ENCODE measurements at regions of chr7 and their contacts with region 1.

Region 1: DNA sequence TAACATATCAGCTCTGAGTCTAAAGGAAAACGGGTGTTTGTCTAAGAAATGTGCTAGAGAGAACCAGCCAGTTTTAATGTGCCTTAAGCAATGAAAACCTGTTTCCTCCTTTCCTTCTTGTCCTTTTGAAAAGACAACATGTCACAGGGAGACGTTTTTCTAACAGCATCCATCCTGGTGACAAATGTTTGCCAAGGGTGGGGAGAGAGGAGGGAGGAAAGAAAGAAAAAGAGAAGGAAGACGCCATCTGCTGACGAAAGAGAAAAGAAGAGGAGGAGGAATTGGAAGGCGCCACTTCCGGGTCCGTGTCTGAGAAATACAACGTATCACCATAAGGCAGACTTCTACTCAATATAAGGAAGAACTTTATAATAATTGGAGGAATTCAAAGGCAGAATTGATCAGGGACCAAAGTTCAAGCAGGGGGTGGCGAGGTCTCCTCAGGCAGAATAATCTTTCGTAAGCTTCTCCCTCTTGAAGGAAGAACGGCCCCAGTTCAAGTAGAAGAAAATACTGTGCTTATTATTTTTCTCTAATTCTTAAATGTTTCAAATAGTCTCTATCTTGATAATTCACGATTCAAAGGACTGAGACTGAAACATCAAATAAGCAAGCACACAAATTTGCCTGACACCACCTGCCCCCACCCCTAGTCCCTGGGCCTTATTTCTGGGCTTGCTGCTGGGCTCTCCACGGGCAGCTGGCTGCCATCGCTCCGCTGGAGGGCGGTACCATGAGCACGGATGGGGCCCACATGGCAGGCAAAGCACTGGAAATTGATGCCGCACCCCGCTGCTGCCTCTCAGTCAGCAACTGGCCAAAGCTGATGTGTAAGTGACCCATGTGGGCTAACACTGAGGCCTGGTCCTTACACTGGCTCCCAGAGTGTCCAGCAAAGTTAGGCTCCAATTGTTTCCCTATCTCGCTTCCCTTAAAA is 273.7 kb upstream of the KLF14 start:
- DNase-seq: peak; percentile 53
- H3K4me3 Mint-ChIP-seq: peak overlapping the region; percentile 68
- H3K27ac Mint-ChIP-seq: peak overlapping the region; percentile 89
- H3K4me1 Mint-ChIP-seq: peaks cover 75% of the 10 kb centered on the region
- H3K27me3 Mint-ChIP-seq: no peaks in the 10 kb centered on the region

Region 2: DNA sequence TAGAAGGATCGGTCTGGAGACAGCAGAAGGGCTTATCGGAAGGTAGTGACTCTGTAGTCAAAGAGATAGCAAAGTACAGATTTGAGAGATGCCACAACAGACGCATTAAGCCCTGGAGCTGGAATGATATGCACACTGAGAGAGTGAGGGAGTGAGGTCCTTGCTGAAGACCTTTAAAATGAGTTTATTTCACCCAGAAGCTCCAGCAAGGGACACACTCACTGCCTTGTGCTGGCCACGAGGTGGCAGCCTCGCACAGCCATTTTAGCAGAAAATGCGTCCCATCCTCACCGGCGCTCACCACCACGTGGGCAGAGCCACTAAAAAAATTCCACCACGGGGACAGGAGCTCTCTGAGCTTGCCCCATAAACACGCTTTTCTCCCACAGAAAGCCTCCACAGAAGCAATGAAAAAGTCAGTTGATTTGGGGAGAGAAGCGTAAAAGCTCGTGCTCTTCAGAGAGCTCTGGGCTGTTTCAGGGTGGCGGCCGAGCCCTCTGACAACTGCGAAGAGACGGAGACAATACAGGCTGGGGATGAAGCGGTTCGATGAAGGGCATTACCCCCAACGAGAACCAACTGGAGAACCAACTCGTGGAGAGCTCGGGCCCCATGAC is 110.7 kb before region 1 on chr7:
- intact Hi-C with region 1: loop called (anchors 1 kb)
- DNase-seq: peak; percentile 53
- H3K4me3 Mint-ChIP-seq: peak overlapping the region; percentile 5
- H3K27ac Mint-ChIP-seq: peak overlapping the region; percentile 89
- H3K4me1 Mint-ChIP-seq: peaks cover 90% of the 10 kb centered on the region
- H3K27me3 Mint-ChIP-seq: no peaks in the 10 kb centered on the region

Region 3: DNA sequence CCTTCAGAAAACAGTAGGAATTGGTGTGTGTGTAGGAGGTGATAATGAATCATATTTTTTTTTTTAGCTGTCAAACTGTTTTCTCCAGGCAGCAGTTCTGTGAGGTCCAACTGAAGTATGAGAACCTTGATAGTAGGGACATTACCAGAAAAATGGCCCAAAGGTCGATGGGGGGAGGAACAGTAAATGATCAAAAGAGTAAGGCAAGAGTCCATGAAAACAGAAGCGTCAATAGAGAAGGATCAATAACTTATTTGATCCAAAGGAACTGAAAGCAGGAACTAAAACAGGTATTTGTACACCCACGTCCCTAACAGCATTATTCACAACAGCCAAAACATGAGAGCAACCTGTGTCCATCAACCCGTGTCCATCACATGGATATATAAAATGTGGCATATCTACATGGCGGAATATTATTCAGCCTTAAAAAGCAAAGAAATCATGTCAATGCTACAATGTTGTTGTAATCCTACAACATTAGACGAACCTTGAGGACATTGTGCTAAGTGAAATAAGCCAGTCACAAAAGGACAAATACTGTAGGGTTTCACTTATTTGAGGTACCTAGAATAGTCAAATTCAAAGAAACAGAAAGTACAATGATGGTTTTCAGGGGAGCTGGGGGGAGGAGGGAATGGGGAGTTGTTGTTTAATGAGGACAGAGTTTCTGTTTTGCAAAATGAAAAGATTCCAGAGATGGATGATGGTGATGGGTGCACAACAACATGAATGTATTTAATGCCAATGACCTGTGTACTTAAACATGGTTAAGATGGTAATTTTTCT is 59.7 kb before region 1 on chr7:
- intact Hi-C with region 1: loop called (anchors 1 kb)
- DNase-seq: no peak
- H3K4me3 Mint-ChIP-seq: peak overlapping the region; percentile 64
- H3K27ac Mint-ChIP-seq: peak overlapping the region; percentile 85
- H3K4me1 Mint-ChIP-seq: peaks cover 54% of the 10 kb centered on the region
- H3K27me3 Mint-ChIP-seq: no peaks in the 10 kb centered on the region

Region 4: DNA sequence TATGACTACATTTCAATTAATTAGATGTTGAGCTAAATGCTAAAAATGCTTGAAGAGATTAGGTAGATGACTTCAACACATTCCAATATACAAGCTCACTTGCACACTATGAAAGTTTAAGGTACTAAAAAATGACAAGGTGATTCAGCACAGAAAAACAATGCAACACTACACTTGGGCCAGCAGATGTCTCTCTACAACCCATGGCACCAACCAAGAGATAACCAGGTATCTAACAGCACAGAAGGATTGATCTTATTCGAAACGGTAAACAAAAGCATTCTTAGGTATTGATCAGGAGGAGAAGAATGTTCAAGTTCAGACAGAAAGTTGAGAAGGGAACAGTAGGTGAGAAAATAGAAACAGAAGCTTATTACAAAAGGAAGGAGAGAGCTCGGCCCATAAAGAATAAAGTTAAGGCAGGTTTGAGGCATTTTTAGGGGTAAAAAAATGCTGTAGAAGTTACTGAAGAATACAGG is 25.5 kb before region 1 on chr7:
- intact Hi-C with region 1: loop called (anchors 1 kb)
- DNase-seq: no peak
- H3K4me3 Mint-ChIP-seq: no peak overlapping the region
- H3K27ac Mint-ChIP-seq: no peak overlapping the region
- H3K4me1 Mint-ChIP-seq: peaks cover 21% of the 10 kb centered on the region
- H3K27me3 Mint-ChIP-seq: no peaks in the 10 kb centered on the region

Region 5: GRCh38 chr7:131031099-131031868 is 23.6 kb after region 1 on chr7:
- intact Hi-C with region 1: loop called (anchors 1 kb)
- DNase-seq: no peak
- H3K4me3 Mint-ChIP-seq: peak overlapping the region; percentile 42
- H3K27ac Mint-ChIP-seq: peak overlapping the region; percentile 81
- H3K4me1 Mint-ChIP-seq: peaks cover 79% of the 10 kb centered on the region
- H3K27me3 Mint-ChIP-seq: no peaks in the 10 kb centered on the region

Region 6: DNA sequence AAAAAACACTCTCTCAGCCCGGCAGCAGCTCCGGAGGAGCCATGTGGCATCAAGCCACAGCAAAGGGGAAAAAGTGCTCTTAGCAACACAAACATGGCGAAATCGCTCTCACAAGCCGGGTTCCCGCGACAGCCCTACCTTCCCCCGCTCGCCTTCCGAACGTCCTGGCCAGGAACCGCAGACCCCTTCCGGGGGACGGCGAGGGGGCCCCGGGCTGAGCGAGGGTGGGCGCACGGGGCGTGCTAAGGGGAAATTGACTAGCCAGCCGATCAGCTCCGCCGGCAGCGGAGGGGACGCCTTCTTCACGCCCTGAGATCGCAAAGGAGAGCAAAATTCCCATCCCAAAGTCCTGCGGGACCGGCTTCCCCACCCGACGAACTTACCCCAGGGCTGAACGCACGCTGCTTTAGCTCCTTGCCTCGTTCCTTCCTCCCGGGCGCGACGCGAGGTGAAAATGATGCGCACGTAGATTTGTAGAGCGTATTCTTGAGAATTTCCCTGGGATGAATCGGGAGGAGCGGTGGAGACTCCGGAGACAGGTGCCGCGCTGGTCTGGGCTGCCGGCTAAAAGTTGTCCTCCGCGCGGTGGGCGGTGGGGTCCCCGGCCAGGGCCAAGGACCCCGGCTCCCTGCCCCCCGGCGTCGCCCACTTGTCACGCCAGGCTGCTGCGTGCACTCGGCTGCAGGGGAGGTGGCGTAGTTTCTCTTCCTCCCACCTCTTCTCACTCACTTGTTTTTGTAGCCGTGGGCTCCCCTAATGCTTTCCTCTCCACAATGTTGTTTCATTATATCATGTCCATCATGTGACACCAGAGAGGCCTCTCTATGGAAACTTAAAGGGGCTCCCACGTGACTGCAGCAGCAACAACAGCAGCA is 99.9 kb after region 1 on chr7:
- intact Hi-C with region 1: loop called (anchors 2 kb)
- DNase-seq: peak; percentile 75
- H3K4me3 Mint-ChIP-seq: peak overlapping the region; percentile 99
- H3K27ac Mint-ChIP-seq: peak overlapping the region; percentile 100
- H3K4me1 Mint-ChIP-seq: peaks cover 65% of the 10 kb centered on the region
- H3K27me3 Mint-ChIP-seq: no peaks in the 10 kb centered on the region

Measured in activated T-helper 1 cell treated with anti-CD3 and anti-CD28 coated beads, Interleukin-12 subunit alpha, Interleukin-12 subunit beta, Interleukin-2, Interleukin-4 antibody, amounts not matched to agents 30 ng/mL and 10 ng/mL and 1 ng/mL, durations not matched to agents 14 hours and 24 hours and 36 hours (primary cell).